CD4-positive, alpha-beta memory T cell (primary cell): ENCODE measurements at regions of chr20 and their contacts with region 1.

Region 1: GRCh38 chr20:31951530-31952453 is at the start of gene PDRG1:
- DNase-seq: peak; percentile 93 to 96 (median 96)
- H3K4me3 ChIP-seq: peak within 1 kb of the TSS; percentile 68 to 92
- H3K4me3 Mint-ChIP-seq: peak within 1 kb of the TSS; percentile 96 to 100 (median 98)
- H3K27ac ChIP-seq: peak within 1 kb of the TSS; percentile 79
- H3K27ac Mint-ChIP-seq: peak within 1 kb of the TSS; percentile 85 to 99 (median 98)
- H3K4me1 ChIP-seq: peaks cover 23% of the 10 kb centered on the region
- H3K4me1 Mint-ChIP-seq: peaks cover 22 to 36% (median 31%) of the 10 kb centered on the region in 4 donors
- H3K27me3 ChIP-seq: no peaks in the 10 kb centered on the region
- H3K27me3 Mint-ChIP-seq: peaks cover 12 to 13% of the 10 kb centered on the region in 2 donors
- total RNA-seq, gene PDRG1: 12.6 to 13.8 TPM

Region 2: DNA sequence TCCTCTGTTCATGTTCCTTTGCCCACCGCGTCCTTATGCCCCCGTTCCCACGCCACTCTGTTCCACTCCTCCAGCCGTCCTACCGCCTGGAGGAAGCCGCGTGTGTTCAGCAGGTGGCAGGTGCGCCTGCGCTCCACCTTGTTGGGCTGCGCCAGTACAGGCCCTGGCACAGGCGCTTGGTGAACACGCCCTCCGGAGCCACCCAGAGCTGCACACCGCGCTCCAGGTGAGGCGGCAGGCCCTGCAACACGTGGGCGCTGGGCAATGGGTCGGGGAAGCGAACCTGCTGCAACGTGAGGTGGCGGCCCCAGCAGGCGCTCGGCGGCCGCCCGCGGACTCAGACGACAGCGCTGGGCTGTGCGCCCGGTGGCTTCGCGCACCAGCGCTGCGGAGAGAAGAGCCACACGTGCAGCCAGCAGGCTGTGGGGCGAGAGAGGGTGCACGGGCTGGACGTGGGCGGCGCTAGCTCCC is 102.3 kb before region 1 on chr20:
- CTCF ChIA-PET with region 1: interaction called, 101 read pairs
- POLR2A ChIA-PET with region 1: interaction called, 7 read pairs
- intact Hi-C with region 1: loop called (anchors 1 kb)
- DNase-seq: no peak
- H3K4me3 ChIP-seq: no peak overlapping the region
- H3K4me3 Mint-ChIP-seq: no peak overlapping the region
- H3K27ac ChIP-seq: no peak overlapping the region
- H3K27ac Mint-ChIP-seq: no peak overlapping the region
- H3K4me1 ChIP-seq: no peaks in the 10 kb centered on the region
- H3K4me1 Mint-ChIP-seq: no peaks in the 10 kb centered on the region
- H3K27me3 ChIP-seq: no peaks in the 10 kb centered on the region
- H3K27me3 Mint-ChIP-seq: peaks cover 11 to 21% of the 10 kb centered on the region in 2 donors

Region 3: GRCh38 chr20:31879143-31879987 is 72.4 kb before region 1 on chr20:
- CTCF ChIA-PET with region 1: interaction called, 8 read pairs
- POLR2A ChIA-PET with region 1: no interaction called
- intact Hi-C with region 1: loop called (anchors 1 kb)
- DNase-seq: peak; percentile 69 to 84 (median 76)
- H3K4me3 ChIP-seq: peak overlapping the region; percentile 21 to 69
- H3K4me3 Mint-ChIP-seq: peak overlapping the region; percentile 90 to 96 (median 94)
- H3K27ac ChIP-seq: no peak overlapping the region
- H3K27ac Mint-ChIP-seq: peak overlapping the region; percentile 78 to 97 (median 89)
- H3K4me1 ChIP-seq: peaks cover 7% of the 10 kb centered on the region
- H3K4me1 Mint-ChIP-seq: peaks cover 6 to 15% (median 8%) of the 10 kb centered on the region in 4 donors
- H3K27me3 ChIP-seq: no peaks in the 10 kb centered on the region
- H3K27me3 Mint-ChIP-seq: peaks cover 8% of the 10 kb centered on the region in 2 donors

Region 4: DNA sequence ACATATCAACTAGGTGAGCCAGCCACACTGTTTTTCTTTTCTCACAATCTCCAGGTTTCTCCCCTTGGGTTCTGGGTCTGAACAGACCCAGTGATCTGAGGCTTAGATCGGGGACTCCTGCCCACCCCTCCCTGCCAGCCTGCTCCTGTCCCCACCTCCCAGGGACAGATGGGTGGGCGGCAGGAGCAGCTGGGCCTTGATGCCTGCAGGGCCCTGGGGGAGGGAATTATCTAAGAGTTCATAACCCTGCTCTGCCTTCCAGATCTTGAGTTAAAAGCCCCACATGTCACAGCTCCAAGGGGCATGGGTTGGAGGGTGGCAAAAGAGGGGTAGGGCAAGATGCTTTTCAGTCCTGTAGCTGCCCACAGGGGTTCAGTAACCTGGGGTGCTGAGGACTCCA is 11.0 kb after region 1 on chr20:
- CTCF ChIA-PET with region 1: interaction called, 14 read pairs
- POLR2A ChIA-PET with region 1: no interaction called
- intact Hi-C with region 1: no loop called
- DNase-seq: no peak
- H3K4me3 ChIP-seq: no peak overlapping the region
- H3K4me3 Mint-ChIP-seq: no peak overlapping the region
- H3K27ac ChIP-seq: no peak overlapping the region
- H3K27ac Mint-ChIP-seq: no peak overlapping the region
- H3K4me1 ChIP-seq: no peaks in the 10 kb centered on the region
- H3K4me1 Mint-ChIP-seq: peaks cover 0 to 8% (median 3%) of the 10 kb centered on the region in 4 donors
- H3K27me3 ChIP-seq: peaks cover 16% of the 10 kb centered on the region
- H3K27me3 Mint-ChIP-seq: peaks cover 36 to 47% of the 10 kb centered on the region in 2 donors

Region 5: GRCh38 chr20:32018269-32019074 is 66.7 kb after region 1 on chr20:
- CTCF ChIA-PET with region 1: interaction called, 5 read pairs
- POLR2A ChIA-PET with region 1: no interaction called
- intact Hi-C with region 1: loop called (anchors 2 kb)
- DNase-seq: peak; percentile 31 to 63 (median 42)
- H3K4me3 ChIP-seq: peak overlapping the region in 1 of 2 donors; percentile 52
- H3K4me3 Mint-ChIP-seq: peak overlapping the region; percentile 76 to 88 (median 83)
- H3K27ac ChIP-seq: no peak overlapping the region
- H3K27ac Mint-ChIP-seq: peak overlapping the region in 1 of 7 donors; percentile 17
- H3K4me1 ChIP-seq: peaks cover 13% of the 10 kb centered on the region
- H3K4me1 Mint-ChIP-seq: peaks cover 13 to 26% (median 20%) of the 10 kb centered on the region in 4 donors
- H3K27me3 ChIP-seq: peaks cover 23% of the 10 kb centered on the region
- H3K27me3 Mint-ChIP-seq: peaks cover 54 to 66% of the 10 kb centered on the region in 2 donors

Region 6: DNA sequence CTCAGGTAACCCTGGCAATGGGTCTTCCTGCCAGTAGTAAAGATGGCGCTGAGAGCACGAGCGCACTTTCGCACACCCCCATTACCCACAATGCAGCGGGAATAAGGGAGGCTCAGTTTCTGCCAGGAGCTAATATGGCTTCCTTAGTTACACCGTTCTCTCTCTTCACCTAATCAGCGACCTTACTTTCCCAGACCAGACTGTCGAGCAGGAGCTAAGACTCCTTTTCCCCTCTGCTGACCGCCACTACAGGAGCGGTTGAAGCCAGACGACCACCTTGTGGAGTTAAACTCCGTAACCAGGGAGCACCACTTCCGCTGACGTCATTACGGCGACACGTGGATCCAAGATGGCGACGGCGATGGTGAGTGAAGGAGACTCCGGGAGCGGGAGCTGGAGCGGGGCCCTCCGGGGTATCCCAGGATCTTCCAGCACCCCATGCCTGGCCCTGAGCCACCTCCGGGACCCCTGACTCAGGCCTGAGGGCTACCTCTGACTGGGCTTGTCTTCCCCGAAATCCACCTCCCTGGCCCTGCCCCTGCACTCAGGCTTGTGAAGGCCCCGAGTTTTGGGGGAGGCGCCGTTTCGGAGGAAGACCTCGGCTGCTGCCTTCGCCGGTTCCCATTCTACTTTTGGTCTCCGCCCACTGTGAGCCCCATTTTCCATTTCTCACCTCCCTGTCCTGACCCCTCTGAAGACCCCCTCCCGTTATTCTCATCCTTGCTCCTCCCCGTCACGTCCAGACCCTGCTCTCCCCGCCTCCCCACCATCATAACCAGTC is 157.8 kb after region 1 on chr20 and contains the start of gene TM9SF4:
- CTCF ChIA-PET with region 1: no interaction called
- POLR2A ChIA-PET with region 1: interaction called, 4 read pairs
- intact Hi-C with region 1: loop called (anchors 5 kb)
- DNase-seq: peak; percentile 93 to 94 (median 94)
- H3K4me3 ChIP-seq: peak within 1 kb of the TSS; percentile 90 to 92
- H3K4me3 Mint-ChIP-seq: peak within 1 kb of the TSS; percentile 95 to 100 (median 98)
- H3K27ac ChIP-seq: peak within 1 kb of the TSS; percentile 100
- H3K27ac Mint-ChIP-seq: peak within 1 kb of the TSS; percentile 96 to 100 (median 100)
- H3K4me1 ChIP-seq: peaks cover 36% of the 10 kb centered on the region
- H3K4me1 Mint-ChIP-seq: peaks cover 26 to 44% (median 36%) of the 10 kb centered on the region in 4 donors
- H3K27me3 ChIP-seq: no peaks in the 10 kb centered on the region
- H3K27me3 Mint-ChIP-seq: no peaks in the 10 kb centered on the region
- total RNA-seq, gene TM9SF4: 36.4 to 40.7 TPM